CD4-positive, alpha-beta T cell (primary cell): ENCODE measurements at regions of chr18 and their contacts with region 1.

Region 1: DNA sequence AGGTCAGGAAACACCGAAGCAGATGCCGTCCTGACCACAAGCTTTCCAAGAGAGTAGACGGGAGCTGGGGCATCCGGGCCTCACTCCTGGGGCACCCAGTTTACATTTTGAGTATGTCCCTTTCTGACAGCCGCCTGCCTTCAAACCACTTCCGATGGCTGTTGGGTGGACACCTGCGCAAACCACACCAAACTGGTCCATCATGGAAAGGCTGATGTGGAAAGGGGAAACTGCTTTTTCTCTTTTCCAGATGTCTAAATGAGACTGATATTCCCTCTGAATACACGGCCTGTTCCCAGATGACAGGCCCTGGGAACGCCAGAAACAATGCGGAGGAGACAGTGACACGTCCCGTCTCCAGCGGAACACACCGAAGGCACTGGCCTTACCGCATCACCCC is 290.0 kb upstream of the SALL3 start:
- DNase-seq: no peak
- ATAC-seq: no peak
- H3K4me3 ChIP-seq: no peak overlapping the region
- H3K4me3 Mint-ChIP-seq: no peak overlapping the region
- H3K27ac ChIP-seq: no peak overlapping the region
- H3K27ac Mint-ChIP-seq: no peak overlapping the region
- H3K4me1 ChIP-seq: no peaks in the 10 kb centered on the region
- H3K4me1 Mint-ChIP-seq: no peaks in the 10 kb centered on the region
- H3K27me3 ChIP-seq: no peaks in the 10 kb centered on the region
- H3K27me3 Mint-ChIP-seq: no peaks in the 10 kb centered on the region
- CTCF ChIP-seq: no peak

Region 2: DNA sequence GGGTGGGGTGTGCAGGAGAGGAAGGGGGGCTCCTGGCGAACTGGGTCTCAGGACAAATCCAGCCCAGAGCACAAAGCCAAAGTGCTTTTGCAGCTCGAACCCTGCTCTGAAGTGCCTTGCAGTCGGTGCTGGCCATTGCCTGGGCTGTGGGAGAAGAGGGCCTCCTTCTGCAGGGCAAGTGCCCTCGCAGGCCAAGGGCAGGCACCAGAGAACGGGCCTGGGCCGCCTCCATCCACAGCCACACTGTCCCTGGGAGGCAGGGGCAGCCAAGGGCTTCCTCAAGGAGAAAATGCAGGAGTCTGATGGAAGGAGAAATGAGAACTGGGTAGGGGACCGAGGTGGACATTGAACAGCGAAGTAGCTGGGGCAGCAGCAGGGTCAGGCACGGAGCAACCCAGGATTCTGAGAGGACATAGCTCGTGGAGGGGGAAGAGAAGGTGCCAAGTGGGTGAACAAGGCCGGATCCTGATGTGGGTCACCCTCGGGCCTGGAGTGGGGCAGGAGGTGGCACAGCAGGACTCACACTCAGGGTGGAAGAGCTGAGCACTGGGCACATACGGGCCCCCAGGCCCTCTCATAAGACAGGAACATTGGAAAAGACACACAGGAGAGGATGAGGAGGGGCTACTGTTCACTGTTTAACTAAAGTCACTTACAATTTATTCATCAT is 22.8 kb before region 1 on chr18:
- CTCF ChIA-PET with region 1: interaction called, 3 read pairs
- POLR2A ChIA-PET with region 1: no interaction called
- intact Hi-C with region 1: loop called in 1 of 2 experiments (anchors 1 kb)
- DNase-seq: no peak
- ATAC-seq: no peak
- H3K4me3 ChIP-seq: no peak overlapping the region
- H3K4me3 Mint-ChIP-seq: no peak overlapping the region
- H3K27ac ChIP-seq: no peak overlapping the region
- H3K27ac Mint-ChIP-seq: no peak overlapping the region
- H3K4me1 ChIP-seq: no peaks in the 10 kb centered on the region
- H3K4me1 Mint-ChIP-seq: no peaks in the 10 kb centered on the region
- H3K27me3 ChIP-seq: no peaks in the 10 kb centered on the region
- H3K27me3 Mint-ChIP-seq: no peaks in the 10 kb centered on the region
- CTCF ChIP-seq: no peak